Motor neuron (in vitro differentiated cells): ENCODE measurements at regions of chr19 and their contacts with region 1.

Region 1: GRCh38 chr19:45692187-45693105 is at the start of gene QPCTL:
- ATAC-seq: peak; percentile 84 to 92 (median 90)
- H3K4me3 ChIP-seq: peak within 1 kb of the TSS; percentile 48 to 74 (median 62)
- H3K27ac ChIP-seq: peak within 1 kb of the TSS; percentile 78 to 87
- H3K4me1 ChIP-seq: peaks cover 7 to 10% of the 10 kb centered on the region in 2 donors
- total RNA-seq, gene QPCTL: 3.7 to 18.1 (median 6.4) TPM

Region 2: DNA sequence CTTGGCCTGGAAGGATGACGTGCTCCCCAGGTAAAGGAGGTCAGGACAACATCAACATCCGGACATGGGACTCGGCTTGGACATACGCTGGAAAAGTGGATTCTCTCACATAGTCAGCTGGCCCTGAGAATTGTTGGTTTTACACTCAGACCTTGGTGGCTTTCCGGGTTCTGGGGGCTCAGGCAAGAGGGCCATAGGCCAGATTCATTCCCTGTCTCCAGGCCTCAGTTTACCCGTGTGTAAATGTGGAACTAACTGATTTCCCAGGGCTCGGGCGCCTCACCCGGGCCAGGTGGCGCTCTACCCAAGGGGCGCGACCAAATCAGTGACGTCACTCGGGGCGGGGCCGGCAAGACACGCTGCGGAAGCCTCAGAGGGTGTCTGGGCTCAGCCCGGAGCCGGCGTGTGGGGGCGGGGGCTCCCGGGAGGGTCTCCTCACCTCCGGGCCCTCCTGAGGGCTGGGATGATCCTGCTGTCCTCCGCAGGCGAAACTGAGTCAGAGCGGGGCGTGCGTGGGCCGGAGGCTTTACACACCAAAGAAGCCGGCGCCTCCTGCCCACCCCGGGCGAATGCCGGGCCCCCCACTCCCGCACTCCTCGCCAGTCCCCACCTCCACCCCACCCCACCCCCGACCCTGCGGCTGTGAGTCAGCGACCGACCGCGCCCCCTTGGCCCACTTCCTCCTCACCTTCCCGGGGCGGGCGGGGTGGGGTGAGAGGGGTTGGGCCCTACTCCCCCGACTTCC is 186.0 kb before region 1 on chr19:
- in situ Hi-C with region 1: loop called in 1 of 9 experiments (anchors 25 kb)
- ATAC-seq: peak; percentile 73 to 86 (median 84)
- H3K4me3 ChIP-seq: peak overlapping the region; percentile 69 to 95 (median 84)
- H3K27ac ChIP-seq: peak overlapping the region; percentile 31 to 51
- H3K4me1 ChIP-seq: peaks cover 6 to 12% of the 10 kb centered on the region in 2 donors